Psoas muscle (tissue), 8 donors: ENCODE measurements at regions of chrX and their contacts with region 1.

Region 1: GRCh38 chrX:11758400-11759171 is 549 bp downstream of the MSL3 start:
- DNase-seq: peak; percentile 89 to 95
- ATAC-seq: peak; percentile 85 to 86 (median 86)
- H3K4me3 ChIP-seq: peak overlapping the region; percentile 75
- H3K27ac ChIP-seq: peak overlapping the region; percentile 92
- H3K4me1 ChIP-seq: peaks cover 9% of the 10 kb centered on the region
- H3K27me3 ChIP-seq: no peaks in the 10 kb centered on the region
- CTCF ChIP-seq: peak; percentile 81

Region 2: GRCh38 chrX:11143931-11144678 is 614.5 kb before region 1 on chrX:
- intact Hi-C with region 1: loop called in 1 of 2 experiments (anchors 10 kb)
- DNase-seq: peak in 1 of 2 donors; percentile 51
- ATAC-seq: peak; percentile 73 to 88 (median 78)
- H3K4me3 ChIP-seq: no peak overlapping the region
- H3K27ac ChIP-seq: no peak overlapping the region
- H3K4me1 ChIP-seq: no peaks in the 10 kb centered on the region
- H3K27me3 ChIP-seq: peaks cover 0 to 2% (median 0%) of the 10 kb centered on the region in 3 donors
- CTCF ChIP-seq: peak; percentile 65

Region 3: GRCh38 chrX:11724122-11725017 is 34.2 kb before region 1 on chrX:
- intact Hi-C with region 1: loop called in 1 of 2 experiments (anchors 5 kb)
- DNase-seq: no peak
- ATAC-seq: peak in 3 of 4 donors; percentile 59 to 83 (median 63)
- H3K4me3 ChIP-seq: no peak overlapping the region
- H3K27ac ChIP-seq: no peak overlapping the region
- H3K4me1 ChIP-seq: peaks cover 13% of the 10 kb centered on the region
- H3K27me3 ChIP-seq: no peaks in the 10 kb centered on the region
- CTCF ChIP-seq: peak; percentile 73

Region 4: DNA sequence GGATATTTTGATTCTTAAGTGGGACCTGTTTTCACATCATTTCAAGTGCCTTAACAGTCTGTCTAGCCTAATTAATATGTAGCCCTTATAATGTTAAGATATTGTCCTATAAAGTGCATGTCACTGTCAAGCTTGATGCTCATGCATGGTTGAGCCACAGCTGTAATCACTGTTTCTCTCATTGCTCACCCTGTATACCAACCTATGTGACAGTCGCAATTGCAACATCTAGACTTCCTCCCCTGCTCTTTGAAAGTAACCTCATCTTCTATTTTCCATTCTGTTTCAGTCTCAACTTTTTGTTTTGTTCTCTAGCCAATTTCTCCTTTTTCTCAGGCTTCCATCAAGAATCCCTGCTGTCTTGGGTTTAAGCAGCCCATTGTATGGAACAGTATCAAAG is 25.0 kb before region 1 on chrX:
- intact Hi-C with region 1: loop called in 1 of 2 experiments (anchors 2 kb)
- DNase-seq: no peak
- ATAC-seq: no peak
- H3K4me3 ChIP-seq: no peak overlapping the region
- H3K27ac ChIP-seq: no peak overlapping the region
- H3K4me1 ChIP-seq: no peaks in the 10 kb centered on the region
- H3K27me3 ChIP-seq: no peaks in the 10 kb centered on the region
- CTCF ChIP-seq: no peak

Region 5: GRCh38 chrX:11867610-11868345 is 109.2 kb after region 1 on chrX:
- intact Hi-C with region 1: no loop called
- DNase-seq: no peak
- ATAC-seq: no peak
- H3K4me3 ChIP-seq: no peak overlapping the region
- H3K27ac ChIP-seq: no peak overlapping the region
- H3K4me1 ChIP-seq: no peaks in the 10 kb centered on the region
- H3K27me3 ChIP-seq: no peaks in the 10 kb centered on the region
- CTCF ChIP-seq: no peak